ENCODE measurements at regions of chr20 and their contacts with region 1.

Region 1: DNA sequence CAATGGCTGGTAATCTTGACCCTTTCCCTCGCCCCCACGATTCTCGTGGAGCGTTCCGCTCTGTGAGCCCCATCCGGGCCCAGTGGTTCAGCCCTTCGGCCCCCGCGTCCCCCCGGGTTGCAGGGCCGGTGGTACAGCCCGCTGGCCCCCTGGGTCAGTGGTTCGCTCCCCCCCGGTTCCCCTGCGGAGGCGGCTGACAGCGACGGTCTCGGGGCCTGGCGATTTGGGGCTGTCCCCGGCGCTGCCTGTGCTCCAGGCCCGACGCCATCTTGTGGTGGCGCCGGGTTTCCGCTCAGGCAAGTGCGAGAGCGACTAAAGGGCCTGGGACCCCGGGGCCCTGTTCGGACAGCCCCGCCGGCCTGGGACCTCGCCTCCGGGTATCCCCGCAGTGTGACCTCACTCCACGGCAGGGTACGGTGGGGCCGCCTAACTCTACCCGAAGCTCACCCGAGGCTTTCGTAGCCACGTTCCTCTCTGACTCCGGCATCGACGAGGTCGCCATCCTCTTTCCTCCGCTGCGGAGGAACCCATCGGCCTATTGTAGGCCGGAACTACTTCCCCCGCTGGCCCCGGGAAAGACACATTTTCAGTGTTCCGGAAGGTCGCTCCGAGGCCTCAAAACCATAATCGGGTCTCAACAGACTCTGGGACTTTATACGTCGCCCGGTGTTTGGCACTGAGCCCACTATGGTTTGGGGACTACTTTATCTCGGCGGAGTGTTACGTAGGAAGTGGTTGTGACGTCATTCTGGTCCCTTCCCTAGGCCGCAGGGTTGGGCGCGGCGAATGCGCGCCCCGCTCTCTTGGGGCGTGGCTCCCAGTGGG is at the start of gene ZNF335:
- DNase-seq: peak; percentile 97 to 98
- ATAC-seq: peak; percentile 81 to 92 (median 81)
- H3K4me3 ChIP-seq: peak within 1 kb of the TSS; percentile 95
- H3K4me3 Mint-ChIP-seq: peak within 1 kb of the TSS; percentile 97
- H3K27ac ChIP-seq: peak within 1 kb of the TSS; percentile 96
- H3K27ac Mint-ChIP-seq: peak within 1 kb of the TSS; percentile 97 to 99
- H3K4me1 ChIP-seq: peaks cover 36% of the 10 kb centered on the region
- H3K4me1 Mint-ChIP-seq: peaks cover 28 to 29% of the 10 kb centered on the region in 2 donors
- H3K27me3 ChIP-seq: no peaks in the 10 kb centered on the region
- H3K27me3 Mint-ChIP-seq: no peaks in the 10 kb centered on the region
- CTCF ChIP-seq: no peak
- total RNA-seq, gene ZNF335: 101 to 119 (median 102) TPM

Region 2: GRCh38 chr20:45812157-45813020 is 159.5 kb before region 1 on chr20 and contains the start of gene UBE2C:
- intact Hi-C with region 1: loop called (anchors 5 kb)
- DNase-seq: peak; percentile 93 to 97
- ATAC-seq: peak; percentile 99 to 100 (median 99)
- H3K4me3 ChIP-seq: peak within 1 kb of the TSS; percentile 51
- H3K4me3 Mint-ChIP-seq: peak within 1 kb of the TSS; percentile 87
- H3K27ac ChIP-seq: no peak within 1 kb of the TSS
- H3K27ac Mint-ChIP-seq: peak within 1 kb of the TSS; percentile 68
- H3K4me1 ChIP-seq: peaks cover 17% of the 10 kb centered on the region
- H3K4me1 Mint-ChIP-seq: peaks cover 16% of the 10 kb centered on the region in 2 donors
- H3K27me3 ChIP-seq: no peaks in the 10 kb centered on the region
- H3K27me3 Mint-ChIP-seq: no peaks in the 10 kb centered on the region
- CTCF ChIP-seq: no peak
- total RNA-seq, gene UBE2C: 0.54 to 3.2 TPM in 2 of 3 donors, not detected in the other

Region 3: GRCh38 chr20:45910670-45911485 is 61.0 kb before region 1 on chr20:
- intact Hi-C with region 1: loop called (anchors 1 kb)
- DNase-seq: peak; percentile 89 to 96
- ATAC-seq: peak; percentile 93 to 97 (median 94)
- H3K4me3 ChIP-seq: peak overlapping the region; percentile 41
- H3K4me3 Mint-ChIP-seq: peak overlapping the region; percentile 75
- H3K27ac ChIP-seq: peak overlapping the region; percentile 26
- H3K27ac Mint-ChIP-seq: peak overlapping the region; percentile 73 to 88
- H3K4me1 ChIP-seq: peaks cover 23% of the 10 kb centered on the region
- H3K4me1 Mint-ChIP-seq: peaks cover 9 to 16% of the 10 kb centered on the region in 2 donors
- H3K27me3 ChIP-seq: peaks cover 10% of the 10 kb centered on the region
- H3K27me3 Mint-ChIP-seq: peaks cover 3% of the 10 kb centered on the region in 2 donors
- CTCF ChIP-seq: no peak

Region 4: DNA sequence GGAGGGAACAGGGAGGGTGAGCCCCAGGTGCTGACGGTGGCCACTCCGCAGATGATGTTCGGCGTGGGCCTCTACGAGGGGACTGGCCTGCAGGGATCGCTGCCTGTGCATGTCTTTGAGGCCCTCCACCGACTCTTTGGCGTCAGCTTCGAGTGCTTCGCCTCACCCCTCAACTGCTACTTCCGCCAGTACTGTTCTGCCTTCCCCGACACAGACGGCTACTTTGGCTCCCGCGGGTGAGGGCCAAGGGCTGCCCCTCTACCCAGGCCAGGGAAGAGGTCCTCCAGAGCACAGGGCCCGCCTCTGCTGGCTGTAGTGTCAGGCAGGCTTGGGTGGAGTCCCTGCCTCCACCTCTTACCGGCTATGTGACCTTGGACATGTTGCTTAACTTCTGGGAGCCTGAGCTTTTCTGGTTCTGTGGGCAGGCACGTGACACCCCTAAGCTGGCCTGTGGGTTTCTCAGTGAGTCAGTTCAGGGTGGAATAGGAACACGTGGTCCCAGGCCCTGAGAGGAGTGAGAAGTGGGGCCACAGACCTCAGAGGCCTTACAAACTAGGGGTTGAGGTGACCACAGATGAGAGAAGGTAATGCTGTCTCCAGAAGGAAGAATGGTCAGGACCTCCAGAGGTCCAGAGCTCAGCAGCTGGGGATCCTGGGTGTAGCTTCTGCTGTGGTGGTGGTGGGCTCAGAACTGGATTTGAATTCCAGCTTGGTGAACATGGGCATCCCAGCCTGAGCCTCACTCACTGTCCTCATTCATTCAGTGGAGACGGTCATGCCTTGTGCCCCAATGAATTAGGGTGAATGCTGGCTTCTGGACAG is 25.5 kb before region 1 on chr20:
- intact Hi-C with region 1: loop called (anchors 1 kb)
- DNase-seq: peak; percentile 74 to 85
- ATAC-seq: peak; percentile 65 to 78 (median 75)
- H3K4me3 ChIP-seq: no peak overlapping the region
- H3K4me3 Mint-ChIP-seq: peak overlapping the region; percentile 72
- H3K27ac ChIP-seq: peak overlapping the region; percentile 87
- H3K27ac Mint-ChIP-seq: peak overlapping the region; percentile 90 to 97
- H3K4me1 ChIP-seq: peaks cover 47% of the 10 kb centered on the region
- H3K4me1 Mint-ChIP-seq: peaks cover 36 to 62% of the 10 kb centered on the region in 2 donors
- H3K27me3 ChIP-seq: no peaks in the 10 kb centered on the region
- H3K27me3 Mint-ChIP-seq: no peaks in the 10 kb centered on the region
- CTCF ChIP-seq: no peak

Region 5: GRCh38 chr20:46013826-46014516 is 42.1 kb after region 1 on chr20:
- intact Hi-C with region 1: loop called (anchors 5 kb)
- DNase-seq: peak; percentile 62 to 87
- ATAC-seq: peak; percentile 63 to 68 (median 66)
- H3K4me3 ChIP-seq: peak overlapping the region; percentile 5
- H3K4me3 Mint-ChIP-seq: peak overlapping the region; percentile 67
- H3K27ac ChIP-seq: no peak overlapping the region
- H3K27ac Mint-ChIP-seq: peak overlapping the region; percentile 3 to 50
- H3K4me1 ChIP-seq: peaks cover 55% of the 10 kb centered on the region
- H3K4me1 Mint-ChIP-seq: peaks cover 27 to 49% of the 10 kb centered on the region in 2 donors
- H3K27me3 ChIP-seq: peaks cover 49% of the 10 kb centered on the region
- H3K27me3 Mint-ChIP-seq: peaks cover 66 to 70% of the 10 kb centered on the region in 2 donors
- CTCF ChIP-seq: peak; percentile 99